Left ventricle myocardium superior (tissue), 1 donor: ENCODE measurements at regions of chr13 and their contacts with region 1.

Region 1: DNA sequence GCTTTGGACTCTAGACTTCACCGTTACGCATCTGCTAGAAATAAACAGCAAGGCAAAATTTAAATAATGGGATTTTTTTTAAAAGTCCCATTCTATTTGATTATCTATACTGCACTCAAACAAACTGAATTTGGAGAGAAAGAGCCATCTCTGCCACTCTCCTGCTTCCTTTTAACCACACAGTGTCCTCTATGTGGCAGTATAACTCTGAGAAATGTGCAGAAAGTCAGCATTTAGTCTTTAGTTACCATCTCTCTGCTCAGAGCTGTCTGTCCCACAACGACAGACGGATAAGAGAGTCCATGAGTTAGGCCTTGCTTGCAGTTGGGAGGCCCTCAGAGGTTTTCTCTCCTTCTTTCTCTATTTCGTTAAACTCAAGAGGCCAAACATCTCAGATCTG is 21.2 kb downstream of the CCNA1 start:
- DNase-seq: no peak
- ATAC-seq: peak; percentile 68

Region 2: DNA sequence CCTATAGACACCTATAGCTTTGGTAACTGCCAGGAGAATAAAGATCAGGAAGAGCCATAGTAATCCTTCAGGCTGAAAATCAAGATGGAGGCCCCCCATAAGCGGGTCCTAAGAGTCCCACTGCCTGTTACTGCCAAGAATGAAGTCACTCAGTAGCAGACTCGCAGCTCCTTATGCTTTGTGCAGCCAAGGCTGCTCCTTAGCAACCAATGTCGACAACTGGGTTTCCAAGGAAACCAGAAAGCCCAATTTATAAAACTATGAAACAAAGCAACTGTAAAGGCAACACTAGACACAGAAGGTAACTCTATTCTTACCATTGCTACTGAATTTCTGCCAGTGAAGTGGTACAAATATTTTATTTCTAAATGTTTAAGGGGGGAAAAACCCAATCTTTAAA is 378.9 kb before region 1 on chr13:
- intact Hi-C with region 1: no loop called
- DNase-seq: no peak
- ATAC-seq: no peak

Region 3: DNA sequence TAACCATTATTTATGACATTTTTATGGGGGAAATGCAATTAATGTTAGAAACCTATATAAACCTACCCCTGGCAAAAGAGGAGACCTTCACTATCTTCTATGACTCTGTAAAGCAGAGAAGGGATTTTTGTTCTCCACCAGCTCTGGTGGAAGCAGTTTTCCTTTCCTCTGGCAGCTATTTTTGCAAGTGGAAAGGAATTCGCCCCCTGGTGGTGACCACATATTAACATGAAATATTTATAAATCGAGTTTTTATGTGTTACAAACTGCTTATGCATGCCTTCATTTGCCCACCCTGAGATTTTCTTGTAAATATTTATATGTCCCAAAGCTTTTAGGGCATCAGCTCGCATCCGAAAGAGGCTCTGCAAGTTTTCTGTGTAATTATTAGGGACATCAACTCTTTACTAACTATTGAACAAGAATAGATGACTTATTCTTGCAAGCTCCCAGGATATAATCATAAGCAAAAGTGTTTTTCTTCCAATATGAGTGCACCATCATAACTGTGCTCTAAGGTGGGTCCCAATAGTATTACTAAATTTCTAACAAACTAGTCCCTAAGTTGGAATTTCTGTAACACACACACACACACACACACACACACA is 282.7 kb after region 1 on chr13:
- intact Hi-C with region 1: loop called (anchors 2 kb)
- DNase-seq: no peak
- ATAC-seq: no peak